Activated naive CD4-positive, alpha-beta T cell treated with anti-CD3 and anti-CD28 coated beads for 36 hours (primary cell): ENCODE measurements at regions of chr19 and their contacts with region 1.

Region 1: DNA sequence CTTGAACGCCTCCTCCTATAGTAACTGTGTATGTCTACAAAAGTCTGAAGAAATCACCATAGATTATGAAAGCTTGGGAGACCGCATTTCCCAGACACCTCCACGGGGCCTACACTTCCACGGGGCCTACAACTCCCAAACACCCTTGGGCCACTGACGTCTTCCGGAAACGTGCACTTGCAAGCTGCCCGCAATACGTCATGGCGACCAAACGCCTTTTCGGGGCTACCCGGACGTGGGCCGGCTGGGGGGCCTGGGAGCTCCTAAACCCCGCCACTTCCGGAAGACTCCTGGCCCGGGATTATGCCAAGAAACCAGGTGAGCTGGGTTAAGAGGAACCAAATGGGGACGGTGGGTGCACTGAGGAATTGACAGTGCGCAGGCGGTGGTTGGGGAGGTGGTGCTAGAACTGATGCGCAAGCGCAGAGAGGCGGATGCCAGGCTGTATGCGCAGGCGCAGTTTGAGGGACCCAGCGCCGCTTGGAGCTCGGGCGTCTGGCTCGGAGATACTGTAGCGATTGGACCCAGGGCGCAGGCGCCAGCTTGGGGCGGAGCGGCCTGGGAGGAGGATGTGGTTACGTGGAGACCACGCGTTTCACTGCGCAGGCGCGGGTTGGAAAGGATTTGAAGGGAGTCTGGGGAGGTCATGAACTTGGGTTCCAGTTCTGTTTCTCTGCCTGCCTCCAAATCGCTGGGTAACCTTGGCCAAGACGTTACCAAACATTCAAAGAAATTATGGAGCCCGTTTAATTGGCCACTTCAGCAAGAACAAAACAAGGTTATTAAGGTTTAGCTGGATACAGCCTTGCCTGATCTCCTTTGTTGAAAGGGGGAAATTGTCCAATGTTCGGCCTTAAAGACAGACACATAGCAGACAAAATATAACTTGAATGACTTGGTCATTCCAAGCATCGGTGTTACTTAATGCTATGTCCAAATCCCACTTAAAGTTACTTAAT is at the start of gene MRPL54:
- DNase-seq: peak; percentile 99
- H3K4me3 Mint-ChIP-seq: peak within 1 kb of the TSS; percentile 99
- H3K27ac Mint-ChIP-seq: peak within 1 kb of the TSS; percentile 98
- H3K4me1 Mint-ChIP-seq: peaks cover 41% of the 10 kb centered on the region
- H3K27me3 Mint-ChIP-seq: no peaks in the 10 kb centered on the region
- total RNA-seq, gene MRPL54: 71.4 to 77.0 TPM

Region 2: DNA sequence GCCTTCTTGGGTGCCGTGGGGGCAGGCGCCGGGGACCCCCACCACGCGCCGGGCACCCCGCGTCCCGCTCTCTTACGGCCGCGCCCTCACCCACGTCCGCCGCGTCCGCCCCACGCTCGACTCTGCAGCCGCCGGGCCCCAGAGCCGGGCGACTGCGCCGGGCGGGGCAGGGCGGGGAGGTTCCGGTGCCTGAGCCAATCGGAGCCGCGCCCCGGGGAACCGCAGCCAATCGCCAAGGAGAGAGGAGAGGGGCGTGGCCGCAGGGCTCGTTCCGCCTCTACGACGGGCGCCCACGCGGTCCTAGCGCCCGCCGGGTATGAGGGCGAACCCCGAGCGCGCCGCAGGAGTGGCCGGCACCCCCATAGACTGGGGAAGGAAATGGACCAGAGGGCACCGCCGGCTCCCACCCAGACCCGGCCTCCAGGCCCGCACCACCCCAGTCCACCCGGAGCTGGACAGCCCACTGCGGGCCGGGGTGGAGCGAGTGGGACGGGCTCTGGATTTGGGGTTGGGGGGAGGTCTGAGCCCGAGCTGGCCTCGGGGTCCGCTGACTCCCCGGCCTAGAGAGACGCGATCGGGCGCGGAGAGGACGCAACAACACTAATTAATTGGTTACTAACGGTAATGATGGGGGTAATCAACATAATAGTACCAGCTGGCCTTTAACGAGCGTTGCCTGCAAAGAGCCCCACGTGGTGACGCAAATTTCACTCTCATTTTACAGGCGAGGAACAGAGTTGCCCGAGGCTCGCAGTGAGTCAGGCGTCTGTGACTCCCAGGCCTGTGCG is 205.1 kb before region 1 on chr19 and contains the start of gene MFSD12:
- CTCF ChIA-PET with region 1: no interaction called
- intact Hi-C with region 1: loop called (anchors 2 kb)
- DNase-seq: peak; percentile 94
- H3K4me3 Mint-ChIP-seq: peak within 1 kb of the TSS; percentile 96
- H3K27ac Mint-ChIP-seq: peak within 1 kb of the TSS; percentile 81
- H3K4me1 Mint-ChIP-seq: peaks cover 37% of the 10 kb centered on the region
- H3K27me3 Mint-ChIP-seq: no peaks in the 10 kb centered on the region
- total RNA-seq, gene MFSD12: 31.3 to 34.0 TPM

Region 3: GRCh38 chr19:3721131-3721886 is 41.5 kb before region 1 on chr19:
- CTCF ChIA-PET with region 1: no interaction called
- intact Hi-C with region 1: loop called (anchors 2 kb)
- DNase-seq: peak; percentile 91
- H3K4me3 Mint-ChIP-seq: peak overlapping the region; percentile 54
- H3K27ac Mint-ChIP-seq: no peak overlapping the region
- H3K4me1 Mint-ChIP-seq: peaks cover 7% of the 10 kb centered on the region
- H3K27me3 Mint-ChIP-seq: peaks cover 9% of the 10 kb centered on the region

Region 4: DNA sequence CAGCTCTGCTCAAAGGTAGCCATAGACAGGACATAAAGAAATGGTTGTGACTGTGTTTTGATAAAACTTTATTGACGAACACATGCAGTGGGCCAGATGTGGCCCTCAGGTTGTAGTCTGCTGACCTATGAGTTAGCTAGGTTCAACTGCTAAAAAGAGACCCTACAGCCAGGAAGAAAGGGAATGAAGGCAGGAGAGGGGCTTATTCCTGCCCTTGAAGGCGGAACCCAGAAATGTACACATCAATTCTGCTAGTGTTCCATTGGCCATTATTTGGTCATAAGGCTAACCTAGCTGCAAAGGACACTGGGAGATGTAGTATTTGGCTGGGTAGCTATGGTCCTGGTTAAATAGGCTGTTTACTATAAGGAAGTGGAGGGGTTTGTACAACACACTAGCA is 19.3 kb before region 1 on chr19:
- CTCF ChIA-PET with region 1: no interaction called
- intact Hi-C with region 1: no loop called
- DNase-seq: no peak
- H3K4me3 Mint-ChIP-seq: no peak overlapping the region
- H3K27ac Mint-ChIP-seq: no peak overlapping the region
- H3K4me1 Mint-ChIP-seq: peaks cover 12% of the 10 kb centered on the region
- H3K27me3 Mint-ChIP-seq: no peaks in the 10 kb centered on the region

Region 5: GRCh38 chr19:3970808-3971598 is 208.2 kb after region 1 on chr19 and contains the start of gene DAPK3:
- CTCF ChIA-PET with region 1: no interaction called
- intact Hi-C with region 1: loop called (anchors 5 kb)
- DNase-seq: peak; percentile 96
- H3K4me3 Mint-ChIP-seq: peak within 1 kb of the TSS; percentile 84
- H3K27ac Mint-ChIP-seq: peak within 1 kb of the TSS; percentile 44
- H3K4me1 Mint-ChIP-seq: peaks cover 22% of the 10 kb centered on the region
- H3K27me3 Mint-ChIP-seq: no peaks in the 10 kb centered on the region
- total RNA-seq, gene DAPK3: 19.3 to 19.6 TPM

Region 6: DNA sequence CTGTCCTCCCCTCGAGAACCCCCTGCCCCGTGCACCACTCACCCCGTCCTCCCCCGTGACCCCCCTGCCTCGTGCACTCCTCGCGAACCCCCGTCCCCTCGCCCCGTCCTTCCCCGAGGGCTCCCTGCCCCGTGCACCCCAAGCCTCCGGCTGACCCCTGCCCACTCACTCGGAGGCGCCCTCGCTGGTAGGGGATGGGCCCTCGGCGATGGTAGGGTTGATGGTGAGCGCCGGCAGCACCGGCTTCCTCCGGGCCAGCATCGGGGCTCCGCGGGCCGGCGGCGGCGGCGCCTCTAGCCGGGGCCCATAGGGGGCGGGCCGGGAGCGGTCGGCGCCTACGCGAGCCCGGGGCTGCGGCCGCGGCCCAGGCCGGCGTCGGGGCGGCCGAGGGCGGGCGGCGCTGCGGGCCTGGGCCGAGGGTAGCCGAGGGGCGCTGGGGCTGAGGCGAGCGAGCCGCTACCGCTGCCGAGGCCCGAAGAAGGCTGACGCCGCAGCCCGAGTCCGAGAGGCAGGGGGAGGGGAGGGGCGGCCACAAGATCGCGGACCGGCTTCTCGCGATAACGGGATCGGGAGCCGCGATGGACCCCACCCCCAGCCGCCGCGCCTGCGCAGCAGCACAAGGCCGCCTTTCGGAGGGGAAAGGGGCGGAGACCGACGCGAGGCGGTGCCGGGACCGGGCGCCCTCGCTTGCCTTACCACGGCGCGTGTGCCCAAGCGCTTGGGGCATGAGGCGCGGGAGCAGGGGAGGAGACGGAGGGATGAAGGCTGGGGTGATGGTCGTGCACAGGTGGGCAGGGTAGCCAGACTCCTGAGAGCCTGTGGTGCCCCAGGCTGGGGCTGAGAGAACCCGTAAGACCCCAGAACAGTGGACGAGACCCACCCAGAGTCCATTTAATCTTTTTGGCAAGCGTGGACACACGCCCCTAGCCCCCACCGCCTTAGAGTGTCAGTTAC is 361.1 kb after region 1 on chr19 and contains the start of gene MAP2K2:
- CTCF ChIA-PET with region 1: no interaction called
- intact Hi-C with region 1: loop called (anchors 1 kb)
- DNase-seq: peak; percentile 96
- H3K4me3 Mint-ChIP-seq: peak within 1 kb of the TSS; percentile 85
- H3K27ac Mint-ChIP-seq: peak within 1 kb of the TSS; percentile 84
- H3K4me1 Mint-ChIP-seq: peaks cover 24% of the 10 kb centered on the region
- H3K27me3 Mint-ChIP-seq: no peaks in the 10 kb centered on the region
- total RNA-seq, gene MAP2K2: 101 to 103 TPM

Region 7: GRCh38 chr19:4400135-4400936 is 637.6 kb after region 1 on chr19 and contains the start of gene SH3GL1:
- CTCF ChIA-PET with region 1: no interaction called
- intact Hi-C with region 1: loop called (anchors 5 kb)
- DNase-seq: peak; percentile 94
- H3K4me3 Mint-ChIP-seq: peak within 1 kb of the TSS; percentile 94
- H3K27ac Mint-ChIP-seq: peak within 1 kb of the TSS; percentile 93
- H3K4me1 Mint-ChIP-seq: peaks cover 73% of the 10 kb centered on the region
- H3K27me3 Mint-ChIP-seq: no peaks in the 10 kb centered on the region
- total RNA-seq, gene SH3GL1: 31.7 to 32.1 TPM